Common myeloid progenitor, CD34-positive (primary cell): ENCODE measurements at regions of chr4 and their contacts with region 1.

Region 1: GRCh38 chr4:154506253-154506652 is 14.7 kb upstream of the DCHS2 start:
- DNase-seq: peak; percentile 24 to 61 (median 58)
- H3K4me3 ChIP-seq: no peak overlapping the region
- H3K27ac ChIP-seq: no peak overlapping the region
- H3K4me1 ChIP-seq: no peaks in the 10 kb centered on the region
- H3K27me3 ChIP-seq: peaks cover 0 to 13% (median 7%) of the 10 kb centered on the region in 5 experiments

Region 2: GRCh38 chr4:154329268-154329868 is 176.9 kb before region 1 on chr4:
- CTCF ChIA-PET with region 1: interaction called, 15 read pairs
- POLR2A ChIA-PET with region 1: no interaction called
- DNase-seq: peak; percentile 27 to 62 (median 60)
- H3K4me3 ChIP-seq: no peak overlapping the region
- H3K27ac ChIP-seq: no peak overlapping the region
- H3K4me1 ChIP-seq: peaks cover 0 to 12% (median 8%) of the 10 kb centered on the region in 4 experiments
- H3K27me3 ChIP-seq: peaks cover 4 to 33% (median 19%) of the 10 kb centered on the region in 5 experiments